PC-9 (cell line): ENCODE measurements at regions of chr5 and their contacts with region 1.

Region 1: GRCh38 chr5:142324871-142325724 is at the start of gene SPRY4:
- DNase-seq: peak; percentile 93 to 96
- H3K4me3 ChIP-seq: peak within 1 kb of the TSS; percentile 82
- H3K27ac ChIP-seq: peak within 1 kb of the TSS; percentile 85
- H3K4me1 ChIP-seq: peaks cover 45% of the 10 kb centered on the region
- H3K27me3 ChIP-seq: no peaks in the 10 kb centered on the region
- CTCF ChIP-seq: no peak
- total RNA-seq, gene SPRY4: 6.9 and 11.0 TPM in 2 replicates

Region 2: DNA sequence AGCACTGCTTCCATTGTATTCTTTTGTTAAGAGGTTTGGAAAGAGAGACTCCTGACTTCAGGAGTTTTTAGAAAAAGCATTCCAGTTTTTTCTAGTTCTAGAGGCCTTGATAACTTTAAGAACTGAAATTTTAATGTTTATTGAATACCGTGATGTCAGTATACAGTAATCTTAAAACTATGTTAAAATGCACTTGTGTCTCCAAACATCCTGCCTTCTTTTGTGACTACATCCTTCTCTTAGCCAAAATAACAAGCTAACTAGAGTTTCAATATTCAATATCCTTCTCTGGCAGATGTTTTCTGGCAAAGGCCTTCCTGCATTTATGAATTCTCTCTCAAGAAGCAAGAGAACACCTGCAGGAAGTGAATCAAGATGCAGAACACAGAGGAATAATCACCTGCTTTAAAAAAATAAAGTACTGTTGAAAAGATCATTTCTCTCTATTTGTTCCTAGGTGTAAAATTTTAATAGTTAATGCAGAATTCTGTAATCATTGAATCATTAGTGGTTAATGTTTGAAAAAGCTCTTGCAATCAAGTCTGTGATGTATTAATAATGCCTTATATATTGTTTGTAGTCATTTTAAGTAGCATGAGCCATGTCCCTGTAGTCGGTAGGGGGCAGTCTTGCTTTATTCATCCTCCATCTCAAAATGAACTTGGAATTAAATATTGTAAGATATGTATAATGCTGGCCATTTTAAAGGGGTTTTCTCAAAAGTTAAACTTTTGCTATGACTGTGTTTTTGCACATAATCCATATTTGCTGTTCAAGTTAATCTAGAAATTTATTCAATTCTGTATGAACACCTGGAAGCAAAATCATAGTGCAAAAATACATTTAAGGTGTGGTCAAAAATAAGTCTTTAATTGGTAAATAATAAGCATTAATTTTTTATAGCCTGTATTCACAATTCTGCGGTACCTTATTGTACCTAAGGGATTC is 173.4 kb before region 1 on chr5:
- CTCF ChIA-PET with region 1: interaction called, 3 read pairs
- POLR2A ChIA-PET with region 1: no interaction called
- intact Hi-C with region 1: loop called (anchors 1 kb)
- DNase-seq: peak; percentile 48 to 49
- H3K4me3 ChIP-seq: no peak overlapping the region
- H3K27ac ChIP-seq: no peak overlapping the region
- H3K4me1 ChIP-seq: peaks cover 9% of the 10 kb centered on the region; the same call in 1 of the 2 replicates
- H3K27me3 ChIP-seq: no peaks in the 10 kb centered on the region
- CTCF ChIP-seq: peak; percentile 92

Region 3: DNA sequence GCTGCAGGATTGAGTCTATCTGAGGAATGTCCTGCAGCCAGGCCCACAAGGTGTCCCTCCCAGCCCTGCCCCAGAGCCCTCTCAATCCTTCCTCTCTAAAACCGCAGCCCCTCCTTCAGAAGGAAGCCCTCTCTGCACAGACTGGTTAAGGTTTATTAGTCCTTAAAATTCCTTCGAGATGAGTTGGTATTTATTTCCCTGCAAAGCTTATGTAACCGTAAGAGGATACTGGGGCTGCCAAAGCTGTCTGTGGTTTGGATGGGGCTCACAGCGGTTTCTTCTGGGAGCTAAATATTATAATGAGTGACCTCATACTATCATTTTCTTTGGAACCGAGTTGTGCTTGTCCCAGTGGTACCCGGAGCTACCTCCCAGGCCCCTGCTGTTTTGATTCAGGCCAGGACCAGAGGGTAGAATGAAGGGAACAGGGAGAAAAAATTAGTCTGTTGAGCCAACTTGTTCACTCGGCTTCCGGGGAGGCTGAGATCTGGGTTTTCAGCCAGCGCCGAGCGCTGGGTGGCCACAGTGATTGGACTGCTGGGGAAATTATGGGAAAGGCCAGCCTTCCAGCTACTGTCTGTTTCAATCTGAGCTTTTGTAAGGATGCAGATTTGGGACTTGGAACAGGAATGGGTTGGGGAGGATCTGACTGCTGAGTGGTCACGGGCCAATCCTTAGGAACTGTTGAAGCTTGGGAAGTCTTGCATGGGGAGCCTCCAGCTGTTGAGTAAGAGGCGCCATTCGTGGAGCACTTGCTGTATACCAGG is 109.0 kb before region 1 on chr5:
- CTCF ChIA-PET with region 1: interaction called, 6 read pairs
- POLR2A ChIA-PET with region 1: interaction called, 3 read pairs
- intact Hi-C with region 1: loop called (anchors 1 kb)
- DNase-seq: peak; percentile 83 to 99
- H3K4me3 ChIP-seq: peak overlapping the region; percentile 34; the same call in 1 of the 2 replicates
- H3K27ac ChIP-seq: peak overlapping the region; percentile 62
- H3K4me1 ChIP-seq: peaks cover 41% of the 10 kb centered on the region
- H3K27me3 ChIP-seq: no peaks in the 10 kb centered on the region
- CTCF ChIP-seq: no peak

Region 4: DNA sequence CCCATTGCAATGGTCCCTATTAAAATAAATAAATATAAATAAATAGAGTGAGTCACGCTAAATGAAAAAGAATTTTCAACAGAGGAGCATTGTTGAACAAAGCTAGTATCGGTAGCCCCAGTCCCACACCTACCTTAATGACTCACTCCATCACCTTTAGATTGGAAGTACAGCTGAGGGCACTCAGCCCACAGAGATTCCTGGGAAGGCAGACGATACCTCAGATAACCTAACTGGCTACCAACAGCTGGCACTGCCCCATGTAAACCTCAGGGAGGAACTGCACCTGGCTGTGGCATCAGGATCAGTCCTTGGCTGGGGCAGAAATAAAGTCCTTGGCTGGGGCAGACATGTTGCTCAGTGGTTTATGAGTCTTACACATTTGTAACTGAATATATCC is 49.6 kb before region 1 on chr5:
- CTCF ChIA-PET with region 1: no interaction called
- POLR2A ChIA-PET with region 1: interaction called, 5 read pairs
- intact Hi-C with region 1: loop called (anchors 2 kb)
- DNase-seq: peak; percentile 69 to 85
- H3K4me3 ChIP-seq: no peak overlapping the region
- H3K27ac ChIP-seq: no peak overlapping the region; the same call in 1 of the 2 replicates
- H3K4me1 ChIP-seq: peaks cover 39% of the 10 kb centered on the region
- H3K27me3 ChIP-seq: no peaks in the 10 kb centered on the region
- CTCF ChIP-seq: no peak

Region 5: GRCh38 chr5:142356716-142357473 is 31.8 kb after region 1 on chr5:
- CTCF ChIA-PET with region 1: interaction called, 4 read pairs
- POLR2A ChIA-PET with region 1: interaction called, 23 read pairs
- intact Hi-C with region 1: loop called (anchors 2 kb)
- DNase-seq: peak; percentile 81 to 87
- H3K4me3 ChIP-seq: peak overlapping the region; percentile 65; the same call in 1 of the 2 replicates
- H3K27ac ChIP-seq: peak overlapping the region; percentile 93
- H3K4me1 ChIP-seq: peaks cover 68% of the 10 kb centered on the region
- H3K27me3 ChIP-seq: no peaks in the 10 kb centered on the region
- CTCF ChIP-seq: no peak

Region 6: GRCh38 chr5:142446131-142446959 is 121.2 kb after region 1 on chr5:
- CTCF ChIA-PET with region 1: no interaction called
- POLR2A ChIA-PET with region 1: no interaction called
- intact Hi-C with region 1: loop called (anchors 5 kb)
- DNase-seq: peak; percentile 32 to 90
- H3K4me3 ChIP-seq: peak overlapping the region; percentile 33; the same call in 1 of the 2 replicates
- H3K27ac ChIP-seq: peak overlapping the region; percentile 99
- H3K4me1 ChIP-seq: peaks cover 57% of the 10 kb centered on the region
- H3K27me3 ChIP-seq: no peaks in the 10 kb centered on the region
- CTCF ChIP-seq: no peak

Region 7: GRCh38 chr5:142548739-142549275 is 223.7 kb after region 1 on chr5:
- CTCF ChIA-PET with region 1: interaction called, 21 read pairs
- POLR2A ChIA-PET with region 1: no interaction called
- intact Hi-C with region 1: loop called (anchors 1 kb)
- DNase-seq: peak; percentile 73 to 80
- H3K4me3 ChIP-seq: no peak overlapping the region
- H3K27ac ChIP-seq: peak overlapping the region; percentile 48
- H3K4me1 ChIP-seq: peaks cover 43% of the 10 kb centered on the region
- H3K27me3 ChIP-seq: no peaks in the 10 kb centered on the region
- CTCF ChIP-seq: peak; percentile 93